Gastrocnemius medialis (tissue), 4 donors: ENCODE measurements at regions of chr15 and their contacts with region 1.

Region 1: GRCh38 chr15:64430000-64430735 is 30.2 kb upstream of the ZNF609 start:
- DNase-seq: no peak
- ATAC-seq: no peak
- H3K4me3 ChIP-seq: no peak overlapping the region
- H3K27ac ChIP-seq: no peak overlapping the region
- H3K4me1 ChIP-seq: no peaks in the 10 kb centered on the region
- H3K27me3 ChIP-seq: no peaks in the 10 kb centered on the region
- CTCF ChIP-seq: no peak
- POLR2A ChIP-seq: no peak

Region 2: GRCh38 chr15:64507293-64507802 is 77.2 kb after region 1 on chr15:
- in situ Hi-C with region 1: no loop called
- intact Hi-C with region 1: no loop called
- DNase-seq: peak; percentile 22 to 27
- ATAC-seq: peak in 1 of 2 donors; percentile 39
- H3K4me3 ChIP-seq: no peak overlapping the region
- H3K27ac ChIP-seq: no peak overlapping the region
- H3K4me1 ChIP-seq: peaks cover 3 to 21% of the 10 kb centered on the region in 2 donors
- H3K27me3 ChIP-seq: no peaks in the 10 kb centered on the region
- CTCF ChIP-seq: no peak
- POLR2A ChIP-seq: no peak

Region 3: DNA sequence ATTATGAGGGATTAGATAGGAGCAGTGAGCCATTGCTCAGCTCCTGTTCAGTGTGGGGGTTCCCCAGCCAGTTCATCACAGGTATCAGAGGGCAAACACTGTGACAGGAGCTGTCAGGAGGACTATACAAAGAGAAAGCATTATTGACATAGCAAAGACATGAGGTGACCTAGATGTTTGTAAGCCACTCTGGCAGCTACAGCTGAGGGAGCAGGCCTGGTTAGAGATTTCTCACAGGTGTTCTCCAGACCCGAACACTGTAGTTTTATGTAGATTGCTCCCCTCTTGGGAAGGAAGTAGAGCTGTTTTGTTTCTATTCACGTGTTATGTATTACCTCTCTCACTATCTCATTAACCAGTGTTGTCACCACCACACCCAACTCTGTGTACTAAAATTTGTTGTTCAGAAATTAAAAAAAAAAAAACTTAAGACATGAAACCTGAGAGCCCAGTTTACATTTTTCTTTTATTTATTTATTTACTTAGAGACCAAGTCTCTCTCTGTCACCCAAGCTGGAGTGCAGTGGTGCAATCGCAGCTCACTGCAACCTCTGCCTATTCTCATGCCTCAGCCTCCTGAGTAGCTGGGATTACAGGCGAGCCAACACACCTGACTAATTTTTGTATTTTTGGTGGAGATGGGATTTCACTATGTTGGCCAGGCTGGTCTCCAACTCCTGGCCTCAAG is 221.5 kb after region 1 on chr15:
- in situ Hi-C with region 1: loop called in 1 of 4 experiments (anchors 25 kb)
- intact Hi-C with region 1: no loop called
- DNase-seq: peak; percentile 12 to 50
- ATAC-seq: peak; percentile 75 to 84
- H3K4me3 ChIP-seq: no peak overlapping the region
- H3K27ac ChIP-seq: peak overlapping the region in 3 of 4 donors; percentile 23 to 50 (median 35)
- H3K4me1 ChIP-seq: peaks cover 5 to 9% of the 10 kb centered on the region in 2 donors
- H3K27me3 ChIP-seq: no peaks in the 10 kb centered on the region
- CTCF ChIP-seq: no peak
- POLR2A ChIP-seq: no peak

Region 4: DNA sequence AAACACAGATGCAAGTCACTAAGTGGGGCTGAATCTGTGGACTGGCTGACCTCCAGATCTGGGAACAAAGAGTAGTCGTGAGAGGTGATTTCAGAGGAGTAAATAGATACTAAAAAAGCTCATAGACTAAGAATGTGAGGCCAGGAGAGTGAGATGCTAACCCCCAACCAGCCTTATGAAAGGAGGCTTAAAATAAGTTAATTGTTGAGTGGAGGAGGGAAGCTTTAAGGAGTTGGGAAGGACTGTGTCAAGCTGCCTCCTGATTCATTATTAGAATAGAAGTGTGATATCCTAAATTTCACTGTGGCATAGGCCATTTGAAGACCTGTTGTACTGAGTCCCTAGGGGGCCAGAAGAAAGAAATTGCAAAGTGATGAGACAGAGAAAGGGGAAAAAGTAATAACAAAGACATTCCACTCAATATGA is 237.6 kb after region 1 on chr15:
- in situ Hi-C with region 1: loop called in 2 of 4 experiments (anchors 10 to 25 kb)
- intact Hi-C with region 1: no loop called
- DNase-seq: no peak
- ATAC-seq: no peak
- H3K4me3 ChIP-seq: no peak overlapping the region
- H3K27ac ChIP-seq: no peak overlapping the region
- H3K4me1 ChIP-seq: no peaks in the 10 kb centered on the region
- H3K27me3 ChIP-seq: no peaks in the 10 kb centered on the region
- CTCF ChIP-seq: no peak
- POLR2A ChIP-seq: no peak